ENCODE measurements at regions of chr3 and their contacts with region 1.

Region 1: DNA sequence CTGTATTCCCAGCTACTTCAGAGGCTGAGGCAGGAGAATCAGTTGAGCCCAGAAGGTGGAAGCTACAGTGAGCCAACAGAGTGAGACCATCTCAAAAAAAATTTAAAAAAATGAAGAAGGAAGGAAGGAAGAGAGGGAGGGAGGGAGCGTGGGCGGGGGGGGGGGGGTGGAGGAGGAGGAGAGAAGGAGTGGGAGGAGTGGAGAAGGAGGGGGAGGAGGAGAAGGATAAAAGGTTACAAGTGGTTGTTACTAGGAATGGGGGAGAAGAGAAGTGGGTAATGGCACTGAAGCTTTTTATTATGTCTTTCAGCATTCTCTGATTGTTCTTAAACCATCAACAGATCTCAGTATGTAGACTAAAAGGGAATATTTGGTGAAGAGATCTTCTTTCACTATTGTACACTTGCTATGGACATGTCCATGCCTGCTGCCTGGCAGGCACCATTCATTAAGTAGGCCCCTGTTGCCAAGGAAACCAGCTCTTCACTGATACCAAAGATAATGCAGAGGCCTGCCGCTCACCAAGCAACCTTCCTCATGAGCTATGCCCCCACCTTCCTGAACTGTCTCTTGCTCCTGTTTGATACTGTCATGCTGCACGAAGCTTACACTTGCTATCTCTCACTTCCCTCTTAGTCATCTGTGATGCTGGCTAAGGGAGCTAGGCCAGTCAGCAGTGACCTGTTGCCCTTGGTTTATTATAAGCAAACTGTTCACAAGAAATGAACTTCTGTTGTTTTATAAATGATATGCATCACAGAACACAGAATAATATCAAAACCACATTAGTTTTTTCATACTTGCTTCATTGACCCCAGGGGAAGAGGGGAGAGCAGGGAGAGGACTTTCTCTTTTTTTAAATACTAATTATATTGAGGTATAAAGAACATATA is 23.1 kb downstream of the EPM2AIP1 start:
- H3K4me3 ChIP-seq: no peak overlapping the region
- H3K27ac ChIP-seq: no peak overlapping the region
- H3K4me1 ChIP-seq: no peaks in the 10 kb centered on the region
- CTCF ChIP-seq: no peak

Region 2: DNA sequence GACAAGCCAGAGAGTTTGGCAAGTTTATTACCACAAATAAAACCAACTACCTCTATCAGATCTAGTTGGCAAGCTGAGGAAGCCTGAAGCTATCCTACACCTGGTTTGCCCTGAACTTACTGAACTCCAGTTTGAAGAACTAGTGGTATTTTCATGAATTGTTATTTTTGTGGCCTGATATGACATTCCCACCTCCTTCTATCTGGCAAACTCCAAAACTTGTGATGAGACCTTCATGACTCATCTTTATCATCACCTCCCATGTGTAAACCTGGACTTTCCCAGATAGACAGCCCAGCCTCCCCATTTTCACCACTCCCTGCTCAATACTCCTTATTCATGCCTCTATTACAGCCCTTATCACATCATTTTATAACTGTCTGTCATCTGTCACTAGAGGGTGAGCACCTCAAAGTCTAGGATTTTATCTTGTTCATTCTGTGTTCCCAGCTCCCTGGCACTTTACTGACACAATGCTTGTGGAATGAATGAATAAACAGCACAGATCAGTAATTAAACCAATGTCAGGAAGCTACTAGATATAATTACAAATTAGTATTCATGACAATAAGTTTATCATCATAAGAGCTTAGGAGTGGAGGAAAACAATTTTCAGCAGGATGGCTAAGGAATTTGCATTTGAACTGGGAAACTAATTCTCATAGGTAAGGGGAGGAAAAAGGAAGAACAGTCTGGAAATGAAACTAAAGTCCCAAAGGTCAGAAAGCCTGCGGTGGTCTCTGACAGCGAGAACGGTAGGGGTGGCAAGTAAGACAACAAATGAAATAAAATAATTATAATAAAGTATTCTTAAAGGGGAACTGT is 11.7 kb before region 1 on chr3:
- CTCF ChIA-PET with region 1: interaction called, 11 read pairs
- POLR2A ChIA-PET with region 1: no interaction called
- H3K4me3 ChIP-seq: no peak overlapping the region
- H3K27ac ChIP-seq: no peak overlapping the region
- H3K4me1 ChIP-seq: no peaks in the 10 kb centered on the region
- CTCF ChIP-seq: no peak

Region 3: DNA sequence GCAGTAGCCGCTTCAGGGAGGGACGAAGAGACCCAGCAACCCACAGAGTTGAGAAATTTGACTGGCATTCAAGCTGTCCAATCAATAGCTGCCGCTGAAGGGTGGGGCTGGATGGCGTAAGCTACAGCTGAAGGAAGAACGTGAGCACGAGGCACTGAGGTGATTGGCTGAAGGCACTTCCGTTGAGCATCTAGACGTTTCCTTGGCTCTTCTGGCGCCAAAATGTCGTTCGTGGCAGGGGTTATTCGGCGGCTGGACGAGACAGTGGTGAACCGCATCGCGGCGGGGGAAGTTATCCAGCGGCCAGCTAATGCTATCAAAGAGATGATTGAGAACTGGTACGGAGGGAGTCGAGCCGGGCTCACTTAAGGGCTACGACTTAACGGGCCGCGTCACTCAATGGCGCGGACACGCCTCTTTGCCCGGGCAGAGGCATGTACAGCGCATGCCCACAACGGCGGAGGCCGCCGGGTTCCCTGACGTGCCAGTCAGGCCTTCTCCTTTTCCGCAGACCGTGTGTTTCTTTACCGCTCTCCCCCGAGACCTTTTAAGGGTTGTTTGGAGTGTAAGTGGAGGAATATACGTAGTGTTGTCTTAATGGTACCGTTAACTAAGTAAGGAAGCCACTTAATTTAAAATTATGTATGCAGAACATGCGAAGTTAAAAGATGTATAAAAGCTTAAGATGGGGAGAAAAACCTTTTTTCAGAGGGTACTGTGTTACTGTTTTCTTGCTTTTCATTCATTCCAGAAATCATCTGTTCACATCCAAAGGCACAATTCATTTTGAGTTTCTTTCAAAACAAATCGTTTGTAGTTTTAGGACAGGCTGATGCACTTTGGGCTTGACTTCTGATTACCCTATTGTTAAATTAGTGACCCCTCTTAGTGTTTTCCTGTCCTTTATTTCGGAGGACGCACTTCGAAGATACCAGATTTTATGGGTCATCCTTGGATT is 23.8 kb after region 1 on chr3 and contains the start of gene MLH1:
- CTCF ChIA-PET with region 1: no interaction called
- POLR2A ChIA-PET with region 1: interaction called, 10 read pairs
- H3K4me3 ChIP-seq: peak within 1 kb of the TSS; percentile 87
- H3K27ac ChIP-seq: peak within 1 kb of the TSS; percentile 82
- H3K4me1 ChIP-seq: no peaks in the 10 kb centered on the region
- CTCF ChIP-seq: no peak

Region 4: DNA sequence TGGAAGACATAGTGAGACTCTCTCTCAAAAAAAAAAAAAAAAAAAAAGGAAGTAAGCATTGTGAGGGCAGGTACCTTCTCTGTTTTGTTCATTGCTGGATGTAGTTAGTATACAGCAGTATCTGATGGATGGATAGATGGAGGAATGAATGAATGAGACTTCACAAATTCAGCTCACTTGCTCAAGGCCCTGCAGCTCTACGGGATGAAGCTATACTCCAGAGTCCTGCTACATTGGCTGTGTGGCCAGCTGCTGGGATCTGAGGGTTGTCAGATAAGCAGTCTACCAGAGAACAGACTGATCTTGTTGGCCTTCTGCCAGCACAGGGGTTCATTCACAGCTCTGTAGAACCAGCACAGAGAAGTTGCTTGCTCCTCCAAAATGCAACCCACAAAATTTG is 58.5 kb after region 1 on chr3:
- CTCF ChIA-PET with region 1: no interaction called
- POLR2A ChIA-PET with region 1: no interaction called
- H3K4me3 ChIP-seq: no peak overlapping the region
- H3K27ac ChIP-seq: no peak overlapping the region
- H3K4me1 ChIP-seq: no peaks in the 10 kb centered on the region
- CTCF ChIP-seq: no peak